ENCODE measurements at regions of chr12 and their contacts with region 1.

Region 1: DNA sequence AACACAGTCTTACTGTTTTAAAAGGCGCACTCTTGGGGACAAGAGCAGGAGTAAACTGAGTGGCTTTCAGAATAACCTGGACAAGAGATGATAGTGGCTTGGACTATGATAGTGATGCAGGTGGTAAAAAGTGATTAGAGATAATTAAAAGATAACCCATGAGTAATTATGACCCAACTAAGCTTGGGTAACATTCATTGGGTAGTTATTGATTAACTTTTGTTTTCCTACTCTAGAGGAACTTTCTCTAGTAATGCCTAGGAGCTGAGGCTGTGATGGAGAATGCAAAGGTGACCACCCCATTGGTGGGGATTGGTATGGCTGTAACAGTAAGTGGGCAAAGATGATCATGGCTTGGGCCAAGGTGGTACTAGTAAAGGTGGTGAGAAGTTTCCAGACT is 22.3 kb upstream of the FRS2 start:
- DNase-seq: no peak
- H3K4me3 ChIP-seq: no peak overlapping the region
- H3K27ac ChIP-seq: no peak overlapping the region
- H3K4me1 ChIP-seq: no peaks in the 10 kb centered on the region
- H3K27me3 ChIP-seq: no peaks in the 10 kb centered on the region
- CTCF ChIP-seq: no peak
- POLR2A ChIP-seq: no peak

Region 2: GRCh38 chr12:69389831-69390230 is 58.1 kb before region 1 on chr12:
- intact Hi-C with region 1: loop called (anchors 2 kb)
- DNase-seq: no peak
- H3K4me3 ChIP-seq: no peak overlapping the region
- H3K27ac ChIP-seq: no peak overlapping the region
- H3K4me1 ChIP-seq: no peaks in the 10 kb centered on the region
- H3K27me3 ChIP-seq: no peaks in the 10 kb centered on the region
- CTCF ChIP-seq: no peak
- POLR2A ChIP-seq: no peak